PC-9 (cell line): ENCODE measurements at regions of chr1 and their contacts with region 1.

Region 1: DNA sequence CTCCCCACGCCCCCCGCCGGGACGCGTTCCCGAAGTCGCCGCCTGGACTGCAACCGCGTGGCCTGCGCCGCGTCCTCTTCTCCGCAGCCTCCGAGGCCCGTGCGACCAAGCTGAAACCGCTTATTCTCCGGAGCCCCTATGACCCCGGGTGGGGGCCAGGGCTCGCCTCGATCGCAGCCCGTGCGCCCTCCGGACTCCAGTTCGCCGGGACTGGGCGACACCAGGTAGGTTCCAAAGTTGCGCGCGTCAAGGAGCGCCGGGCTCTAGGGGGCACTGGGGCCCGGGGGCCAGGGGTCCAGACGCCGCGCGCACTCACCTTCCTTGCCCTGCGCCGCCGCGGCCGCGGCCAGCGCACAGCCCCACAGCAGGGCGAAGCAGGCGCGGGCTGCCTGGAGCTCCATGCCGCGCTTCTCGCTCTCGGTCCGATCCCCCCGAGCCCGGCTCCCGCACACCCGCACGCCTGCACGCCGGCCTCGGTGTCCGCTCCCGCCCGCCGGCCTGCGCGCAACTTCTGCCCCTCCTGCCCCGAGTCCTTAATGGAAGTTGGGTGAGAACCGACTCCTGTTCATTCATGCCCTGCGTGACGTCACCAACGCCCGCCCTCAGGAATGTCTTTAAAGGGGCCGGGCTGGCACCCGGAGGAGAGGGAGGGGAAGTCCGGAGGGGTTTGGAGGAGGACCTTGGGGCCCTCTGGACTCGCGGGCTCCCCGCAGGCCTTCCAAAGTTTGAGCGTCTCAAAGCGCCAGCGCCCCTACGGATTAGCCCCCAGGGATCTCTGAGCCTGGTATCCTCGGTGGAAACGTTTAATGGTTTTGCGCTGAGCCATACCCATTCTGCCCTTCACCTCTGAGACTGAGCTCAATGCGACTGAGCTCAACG is at the start of gene EPHA2:
- DNase-seq: peak; percentile 84 to 92
- H3K4me3 ChIP-seq: peak within 1 kb of the TSS; percentile 86
- H3K27ac ChIP-seq: peak within 1 kb of the TSS; percentile 81
- H3K4me1 ChIP-seq: peaks cover 51% of the 10 kb centered on the region
- H3K27me3 ChIP-seq: no peaks in the 10 kb centered on the region
- CTCF ChIP-seq: no peak
- total RNA-seq, gene EPHA2: 48.3 and 65.8 TPM in 2 replicates

Region 2: GRCh38 chr1:16078925-16079656 is 76.7 kb before region 1 on chr1:
- CTCF ChIA-PET with region 1: interaction called, 12 read pairs
- POLR2A ChIA-PET with region 1: interaction called, 13 read pairs
- intact Hi-C with region 1: loop called (anchors 1 kb)
- DNase-seq: peak; percentile 67 to 82
- H3K4me3 ChIP-seq: no peak overlapping the region
- H3K27ac ChIP-seq: peak overlapping the region; percentile 20; the same call in 1 of the 2 replicates
- H3K4me1 ChIP-seq: peaks cover 63% of the 10 kb centered on the region
- H3K27me3 ChIP-seq: no peaks in the 10 kb centered on the region
- CTCF ChIP-seq: peak; percentile 92

Region 3: GRCh38 chr1:16173020-16173980 is 17.5 kb after region 1 on chr1:
- CTCF ChIA-PET with region 1: interaction called, 14 read pairs
- POLR2A ChIA-PET with region 1: interaction called, 8 read pairs
- intact Hi-C with region 1: loop called (anchors 1 kb)
- DNase-seq: peak; percentile 95 to 98
- H3K4me3 ChIP-seq: no peak overlapping the region
- H3K27ac ChIP-seq: peak overlapping the region; percentile 98
- H3K4me1 ChIP-seq: peaks cover 97% of the 10 kb centered on the region
- H3K27me3 ChIP-seq: no peaks in the 10 kb centered on the region
- CTCF ChIP-seq: no peak

Region 4: GRCh38 chr1:16181887-16182719 is 26.3 kb after region 1 on chr1:
- CTCF ChIA-PET with region 1: interaction called, 5 read pairs
- POLR2A ChIA-PET with region 1: interaction called, 5 read pairs
- intact Hi-C with region 1: loop called (anchors 1 kb)
- DNase-seq: peak; percentile 86 to 90
- H3K4me3 ChIP-seq: peak overlapping the region; percentile 39; the same call in 1 of the 2 replicates
- H3K27ac ChIP-seq: peak overlapping the region; percentile 93
- H3K4me1 ChIP-seq: peaks cover 86% of the 10 kb centered on the region
- H3K27me3 ChIP-seq: no peaks in the 10 kb centered on the region
- CTCF ChIP-seq: no peak

Region 5: DNA sequence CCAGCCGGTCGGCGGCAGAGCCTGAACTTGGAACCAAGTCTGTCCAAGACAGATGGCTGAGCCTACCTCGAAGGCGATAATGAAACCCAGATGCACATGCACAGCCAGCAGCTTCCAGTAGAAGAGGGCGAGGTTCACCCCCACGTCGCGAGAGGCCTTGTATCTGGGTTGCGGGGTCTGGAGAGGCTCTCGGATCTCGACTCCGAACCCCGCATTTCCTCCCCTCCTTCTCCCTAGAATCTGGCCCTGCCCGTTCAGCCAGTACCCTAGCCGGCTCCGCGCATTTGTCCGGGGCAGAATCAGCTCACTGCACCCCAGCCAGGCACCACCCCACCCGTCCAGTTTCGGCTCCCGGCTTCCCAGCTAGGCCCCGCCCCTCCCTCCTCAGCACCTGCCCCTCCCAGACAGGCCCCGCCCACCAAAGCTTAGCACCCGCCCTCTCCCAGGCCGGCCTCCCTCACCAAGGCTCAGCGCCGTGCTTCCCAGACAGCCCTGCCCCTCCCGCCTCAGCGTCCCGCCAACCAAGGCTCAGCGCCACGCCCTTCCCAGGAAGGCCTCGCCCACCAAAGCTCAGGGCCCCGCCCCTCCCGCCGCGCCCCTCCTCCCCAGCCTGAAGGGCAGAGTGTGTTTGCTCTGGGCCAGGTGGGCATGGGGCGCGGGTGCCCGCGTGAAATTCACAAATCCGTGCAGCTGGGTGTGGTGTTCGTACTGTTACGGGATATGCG is 61.5 kb after region 1 on chr1:
- CTCF ChIA-PET with region 1: no interaction called
- POLR2A ChIA-PET with region 1: interaction called, 10 read pairs
- intact Hi-C with region 1: no loop called
- DNase-seq: peak; percentile 83 to 98
- H3K4me3 ChIP-seq: peak overlapping the region; percentile 51; the same call in 1 of the 2 replicates
- H3K27ac ChIP-seq: no peak overlapping the region
- H3K4me1 ChIP-seq: peaks cover 17% of the 10 kb centered on the region
- H3K27me3 ChIP-seq: no peaks in the 10 kb centered on the region
- CTCF ChIP-seq: no peak

Region 6: DNA sequence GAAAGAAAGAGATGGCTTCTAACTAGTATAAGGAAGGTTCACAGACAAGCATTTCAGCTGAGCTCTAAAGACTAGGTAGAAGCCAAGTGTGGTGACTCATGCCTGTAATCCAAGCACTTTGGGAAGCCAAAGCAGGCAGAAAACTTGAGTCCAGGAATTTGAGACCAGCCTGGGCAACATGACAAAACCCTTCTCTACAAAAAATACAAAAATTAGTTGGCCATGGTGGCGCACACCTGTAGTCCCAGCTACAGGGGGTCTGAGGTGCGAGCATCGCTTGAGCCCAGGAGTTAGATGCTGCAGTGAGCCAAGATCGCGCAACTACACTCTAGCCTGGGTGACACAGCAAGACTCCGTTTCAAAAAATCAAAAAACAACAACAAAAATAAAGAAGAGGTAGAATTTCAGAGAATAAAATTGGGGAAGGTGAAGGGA is 168.7 kb after region 1 on chr1:
- CTCF ChIA-PET with region 1: no interaction called
- POLR2A ChIA-PET with region 1: no interaction called
- intact Hi-C with region 1: no loop called
- DNase-seq: peak; percentile 37 to 55
- H3K4me3 ChIP-seq: no peak overlapping the region
- H3K27ac ChIP-seq: peak overlapping the region; percentile 32; the same call in 1 of the 2 replicates
- H3K4me1 ChIP-seq: peaks cover 9% of the 10 kb centered on the region
- H3K27me3 ChIP-seq: no peaks in the 10 kb centered on the region
- CTCF ChIP-seq: no peak

Region 7: DNA sequence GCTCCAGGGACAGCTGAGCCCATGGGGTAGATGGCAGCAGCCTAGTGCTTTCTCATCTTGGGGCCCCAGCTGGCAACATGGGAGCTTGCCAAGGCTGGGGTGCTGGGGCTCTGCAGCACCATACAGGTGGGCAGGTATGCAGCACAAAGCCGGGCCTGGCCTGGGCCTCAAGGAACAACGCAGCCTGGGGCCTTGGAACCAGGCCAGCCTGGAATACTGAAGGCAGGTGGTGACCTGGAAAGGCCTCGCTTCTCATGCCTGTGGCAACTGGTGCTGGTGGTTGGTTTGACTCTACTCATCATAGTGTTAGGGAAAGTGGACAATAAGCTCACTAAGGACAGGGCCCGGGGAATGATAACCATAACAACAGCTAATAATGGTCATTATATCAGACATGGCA is 925.1 kb after region 1 on chr1:
- CTCF ChIA-PET with region 1: no interaction called
- POLR2A ChIA-PET with region 1: no interaction called
- intact Hi-C with region 1: no loop called
- DNase-seq: peak in 1 of 2 experiments; percentile 60
- H3K4me3 ChIP-seq: no peak overlapping the region
- H3K27ac ChIP-seq: no peak overlapping the region
- H3K4me1 ChIP-seq: no peaks in the 10 kb centered on the region
- H3K27me3 ChIP-seq: no peaks in the 10 kb centered on the region
- CTCF ChIP-seq: no peak